Sigmoid colon (tissue), 7 donors: ENCODE measurements at regions of chr13 and their contacts with region 1.

Region 1: GRCh38 chr13:110023729-110024644 is 237.6 kb upstream of the IRS2 start:
- DNase-seq: peak; percentile 85
- H3K4me3 ChIP-seq: no peak overlapping the region
- H3K27ac ChIP-seq: peak overlapping the region; percentile 74 to 86 (median 80)
- H3K4me1 ChIP-seq: peaks cover 0 to 21% (median 19%) of the 10 kb centered on the region in 4 donors
- H3K27me3 ChIP-seq: no peaks in the 10 kb centered on the region
- CTCF ChIP-seq: no peak
- EP300 ChIP-seq: peak; percentile 33 to 76 (median 64)
- POLR2A ChIP-seq: no peak

Region 2: DNA sequence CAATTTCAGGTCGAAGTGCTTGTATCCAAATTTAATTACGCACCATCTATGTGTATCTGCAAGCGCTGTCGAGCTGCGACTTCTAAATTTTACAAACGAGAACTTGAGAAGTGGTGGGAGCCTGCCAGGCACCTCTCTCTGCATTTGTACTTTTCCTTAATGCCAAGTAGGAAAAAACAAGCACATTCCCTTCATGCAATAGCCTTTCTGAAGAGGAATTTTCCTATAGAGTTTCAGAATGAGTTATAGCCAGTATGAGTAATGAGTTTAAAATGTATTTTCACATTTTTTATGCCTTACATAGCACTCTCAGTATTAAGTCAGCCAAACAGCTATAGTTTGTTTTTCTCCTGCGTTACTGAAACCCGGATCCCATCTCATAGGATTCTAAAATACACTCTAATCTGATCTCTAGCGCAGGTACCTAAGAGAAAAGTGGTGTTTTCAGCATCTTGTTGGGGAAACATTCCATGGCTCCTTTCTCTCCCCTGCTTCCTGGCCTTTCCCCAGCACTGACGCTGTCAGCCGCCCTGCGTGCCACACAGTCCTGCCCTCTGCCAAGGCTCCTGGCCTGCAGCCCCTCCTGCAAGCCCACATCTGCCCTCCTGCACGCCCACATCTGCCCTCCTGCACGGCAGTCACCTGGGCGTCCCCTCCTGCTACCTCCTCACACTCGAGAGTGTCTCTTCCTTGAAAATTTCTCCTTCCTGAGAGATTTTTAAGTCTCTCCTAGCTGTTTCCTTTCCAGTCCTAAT is 867.6 kb before region 1 on chr13:
- intact Hi-C with region 1: loop called (anchors 10 kb)
- DNase-seq: no peak
- H3K4me3 ChIP-seq: peak overlapping the region in 2 of 4 donors; percentile 10 to 14
- H3K27ac ChIP-seq: peak overlapping the region; percentile 57 to 88 (median 79)
- H3K4me1 ChIP-seq: peaks cover 0 to 30% (median 27%) of the 10 kb centered on the region in 4 donors
- H3K27me3 ChIP-seq: no peaks in the 10 kb centered on the region
- CTCF ChIP-seq: no peak
- EP300 ChIP-seq: peak in 1 of 4 donors; percentile 14
- POLR2A ChIP-seq: no peak

Region 3: GRCh38 chr13:109840201-109840892 is 183.6 kb before region 1 on chr13:
- intact Hi-C with region 1: no loop called
- DNase-seq: no peak
- H3K4me3 ChIP-seq: no peak overlapping the region
- H3K27ac ChIP-seq: no peak overlapping the region
- H3K4me1 ChIP-seq: peaks cover 0 to 19% (median 10%) of the 10 kb centered on the region in 4 donors
- H3K27me3 ChIP-seq: no peaks in the 10 kb centered on the region
- CTCF ChIP-seq: no peak
- EP300 ChIP-seq: no peak
- POLR2A ChIP-seq: no peak

Region 4: DNA sequence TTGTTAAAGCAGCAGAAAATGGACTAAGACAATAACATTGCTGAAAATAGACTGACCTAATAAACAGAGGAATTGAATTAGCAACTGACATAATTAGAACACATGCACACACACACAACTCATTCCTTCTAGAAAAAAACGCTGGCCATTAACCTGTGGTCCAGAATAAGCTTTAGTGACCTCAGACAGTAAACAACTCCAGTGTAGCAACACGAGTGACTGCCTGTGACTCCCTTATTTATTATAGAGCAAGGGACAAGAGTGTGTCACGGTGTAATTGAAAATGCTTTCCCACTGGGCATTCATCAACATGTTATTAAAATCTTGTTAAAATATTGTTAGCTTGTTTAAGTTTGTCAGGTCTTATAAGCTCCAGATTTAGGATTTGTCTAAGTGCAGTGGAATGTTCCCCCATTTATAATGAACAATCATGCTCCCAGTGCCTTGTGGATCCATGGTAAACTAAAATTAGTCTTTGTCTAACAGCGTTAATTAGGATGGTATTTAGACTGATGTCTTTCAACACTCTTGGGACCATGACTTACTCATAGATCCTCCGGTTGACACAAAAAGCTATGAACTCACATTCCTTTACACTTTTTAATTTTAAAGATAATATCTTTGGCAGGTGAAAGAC is 125.9 kb before region 1 on chr13:
- intact Hi-C with region 1: loop called (anchors 5 kb)
- DNase-seq: no peak
- H3K4me3 ChIP-seq: no peak overlapping the region
- H3K27ac ChIP-seq: peak overlapping the region in 2 of 4 donors; percentile 10 to 39
- H3K4me1 ChIP-seq: peaks cover 0 to 15% (median 9%) of the 10 kb centered on the region in 4 donors
- H3K27me3 ChIP-seq: no peaks in the 10 kb centered on the region
- CTCF ChIP-seq: no peak
- EP300 ChIP-seq: no peak
- POLR2A ChIP-seq: no peak